IMR-90 (cell line): ENCODE measurements at regions of chr10 and their contacts with region 1.

Region 1: DNA sequence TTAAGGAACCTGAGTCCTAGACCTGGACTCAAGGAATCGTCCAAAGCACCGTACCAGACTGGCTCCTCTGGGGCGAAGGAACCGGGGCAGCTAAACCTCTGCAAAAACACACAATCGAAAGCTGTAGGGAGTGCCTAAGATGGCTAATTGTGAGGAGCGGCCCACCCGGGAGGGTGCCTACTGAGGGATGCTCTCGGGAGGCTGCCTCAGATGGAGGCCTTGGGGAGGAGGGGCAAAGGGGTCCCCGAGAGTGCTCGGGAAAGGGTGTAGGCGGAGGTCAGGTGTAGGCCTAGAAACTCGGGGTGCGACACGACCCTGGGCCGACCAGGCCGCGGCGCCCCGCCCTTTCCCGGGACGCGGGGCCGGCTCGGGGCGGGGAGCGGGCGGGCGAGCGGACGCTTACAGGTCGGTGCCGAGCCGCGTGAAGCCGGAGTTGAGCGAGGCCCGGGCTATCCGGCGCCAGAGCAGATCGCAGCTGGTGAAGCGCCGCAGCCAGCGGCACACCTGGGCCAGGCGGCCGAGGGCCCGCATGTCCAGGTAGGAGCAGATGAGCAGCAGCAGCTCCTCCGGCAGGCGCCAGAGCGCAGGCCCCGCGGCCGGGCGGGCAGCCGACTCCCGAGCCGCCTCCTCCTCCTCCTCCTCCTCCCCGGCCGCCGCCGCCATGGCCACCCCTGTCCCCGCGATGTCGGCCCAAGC is 844 bp downstream of the FBXW4 start:
- DNase-seq: peak; percentile 39
- ATAC-seq: peak; percentile 87
- H3K4me3 ChIP-seq: peak overlapping the region; percentile 75
- H3K27ac ChIP-seq: peak overlapping the region; percentile 100
- H3K4me1 ChIP-seq: peaks cover 7% of the 10 kb centered on the region
- H3K27me3 ChIP-seq: no peaks in the 10 kb centered on the region
- CTCF ChIP-seq: no peak
- POLR2A ChIP-seq: no peak
- RAD21 ChIP-seq: no peak

Region 2: GRCh38 chr10:100286051-100287033 is 1407.8 kb before region 1 on chr10 and contains the start of gene BLOC1S2:
- CTCF ChIA-PET with region 1: no interaction called
- POLR2A ChIA-PET with region 1: interaction called, 11 read pairs
- dilution Hi-C with region 1: no loop called
- in situ Hi-C with region 1: no loop called
- intact Hi-C with region 1: no loop called
- DNase-seq: peak; percentile 92
- ATAC-seq: peak; percentile 97
- H3K4me3 ChIP-seq: peak within 1 kb of the TSS; percentile 64
- H3K27ac ChIP-seq: peak within 1 kb of the TSS; percentile 86
- H3K4me1 ChIP-seq: peaks cover 3% of the 10 kb centered on the region
- H3K27me3 ChIP-seq: peaks cover 7% of the 10 kb centered on the region
- CTCF ChIP-seq: no peak
- POLR2A ChIP-seq: peak; percentile 96
- RAD21 ChIP-seq: no peak
- total RNA-seq, gene BLOC1S2: 26.0 and 49.4 TPM in 2 replicates

Region 3: GRCh38 chr10:101843032-101844021 is 149.2 kb after region 1 on chr10 and contains the start of gene KCNIP2:
- CTCF ChIA-PET with region 1: no interaction called
- POLR2A ChIA-PET with region 1: no interaction called
- dilution Hi-C with region 1: no loop called
- in situ Hi-C with region 1: no loop called
- intact Hi-C with region 1: no loop called
- DNase-seq: no peak
- ATAC-seq: no peak
- H3K4me3 ChIP-seq: no peak within 1 kb of the TSS
- H3K27ac ChIP-seq: no peak within 1 kb of the TSS
- H3K4me1 ChIP-seq: peaks cover 8% of the 10 kb centered on the region; the same call in 1 of the 2 replicates
- H3K27me3 ChIP-seq: no peaks in the 10 kb centered on the region
- CTCF ChIP-seq: peak; percentile 39
- POLR2A ChIP-seq: no peak
- RAD21 ChIP-seq: no peak
- total RNA-seq, gene KCNIP2: under 0.01 TPM in 1 of 2 replicates, not detected in the other

Region 4: DNA sequence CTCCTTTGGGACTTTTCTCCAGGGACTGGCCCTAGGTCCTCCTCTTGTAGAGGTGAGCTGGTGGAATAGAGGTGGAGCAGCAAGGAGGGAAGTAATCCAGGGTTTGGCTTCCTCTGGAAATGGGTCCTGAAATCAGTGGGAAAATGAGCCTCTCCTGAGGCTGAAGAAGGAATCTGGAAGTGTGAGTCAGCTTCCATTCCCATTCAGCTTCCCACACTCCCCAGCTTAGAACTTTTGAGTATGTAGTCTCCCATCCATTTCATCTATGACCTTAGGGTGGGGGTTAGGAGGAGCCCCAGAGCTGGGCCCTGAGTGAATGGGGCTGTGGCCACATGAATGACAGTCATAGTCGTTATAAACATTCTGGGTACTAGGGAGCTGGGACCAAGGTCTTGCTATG is 408.3 kb after region 1 on chr10:
- CTCF ChIA-PET with region 1: no interaction called
- POLR2A ChIA-PET with region 1: interaction called, 12 read pairs
- dilution Hi-C with region 1: no loop called
- in situ Hi-C with region 1: no loop called
- intact Hi-C with region 1: no loop called
- DNase-seq: no peak
- ATAC-seq: no peak; the same call in 1 of the 2 replicates
- H3K4me3 ChIP-seq: no peak overlapping the region
- H3K27ac ChIP-seq: no peak overlapping the region
- H3K4me1 ChIP-seq: no peaks in the 10 kb centered on the region
- H3K27me3 ChIP-seq: no peaks in the 10 kb centered on the region
- CTCF ChIP-seq: no peak
- POLR2A ChIP-seq: no peak
- RAD21 ChIP-seq: no peak